Posterior cingulate gyrus (tissue), 11 donors: ENCODE measurements at regions of chr15 and their contacts with region 1.

Region 1: GRCh38 chr15:90931737-90932659 is at the start of gene HDDC3:
- DNase-seq: peak; percentile 78 to 98 (median 92)

Region 2: GRCh38 chr15:90648137-90649070 is 283.6 kb before region 1 on chr15:
- intact Hi-C with region 1: loop called (anchors 2 kb)
- DNase-seq: peak in 5 of 10 donors; percentile 38 to 82 (median 61)

Region 3: GRCh38 chr15:90902040-90902839 is 29.8 kb before region 1 on chr15:
- intact Hi-C with region 1: loop called (anchors 1 kb)
- DNase-seq: peak; percentile 58 to 95 (median 76)

Region 4: GRCh38 chr15:91151781-91152563 is 220.0 kb after region 1 on chr15:
- intact Hi-C with region 1: no loop called
- DNase-seq: peak in 1 of 10 donors; percentile 82